Activated naive CD4-positive, alpha-beta T cell treated with anti-CD3 and anti-CD28 coated beads for 36 hours (primary cell): ENCODE measurements at regions of chr1 and their contacts with region 1.

Region 1: DNA sequence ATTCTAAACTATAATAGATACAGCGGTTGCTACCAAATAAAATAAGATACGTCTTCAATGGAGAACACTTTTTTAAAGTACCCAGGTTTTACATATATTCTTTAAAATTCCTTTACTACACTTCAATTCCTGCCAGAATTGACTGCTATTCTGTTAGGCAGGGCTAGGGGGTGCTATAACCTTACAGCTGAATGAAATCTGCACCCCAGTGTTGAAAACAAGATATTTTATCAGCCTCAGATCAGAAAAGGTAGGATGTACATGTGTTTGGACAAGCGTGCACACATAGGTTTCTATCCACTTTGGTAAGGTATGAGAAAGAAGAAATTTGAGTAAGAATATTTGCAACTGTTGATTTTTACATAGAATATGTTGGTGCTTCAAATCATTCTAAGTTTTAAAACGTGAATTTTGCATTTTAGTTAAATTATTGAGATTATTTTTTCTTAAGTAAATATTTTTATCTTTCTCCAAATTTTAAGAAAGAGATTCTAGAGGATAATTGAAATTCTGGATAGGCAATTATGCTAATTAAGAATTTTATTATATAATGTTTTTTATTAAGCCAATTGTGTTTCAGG is 490.8 kb upstream of the ADGRL4 start:
- DNase-seq: peak; percentile 16
- H3K4me3 Mint-ChIP-seq: no peak overlapping the region
- H3K27ac Mint-ChIP-seq: no peak overlapping the region
- H3K4me1 Mint-ChIP-seq: no peaks in the 10 kb centered on the region
- H3K27me3 Mint-ChIP-seq: no peaks in the 10 kb centered on the region

Region 2: GRCh38 chr1:78911956-78912880 is 585.1 kb before region 1 on chr1:
- CTCF ChIA-PET with region 1: no interaction called
- intact Hi-C with region 1: no loop called
- DNase-seq: no peak
- H3K4me3 Mint-ChIP-seq: no peak overlapping the region
- H3K27ac Mint-ChIP-seq: no peak overlapping the region
- H3K4me1 Mint-ChIP-seq: no peaks in the 10 kb centered on the region
- H3K27me3 Mint-ChIP-seq: no peaks in the 10 kb centered on the region

Region 3: DNA sequence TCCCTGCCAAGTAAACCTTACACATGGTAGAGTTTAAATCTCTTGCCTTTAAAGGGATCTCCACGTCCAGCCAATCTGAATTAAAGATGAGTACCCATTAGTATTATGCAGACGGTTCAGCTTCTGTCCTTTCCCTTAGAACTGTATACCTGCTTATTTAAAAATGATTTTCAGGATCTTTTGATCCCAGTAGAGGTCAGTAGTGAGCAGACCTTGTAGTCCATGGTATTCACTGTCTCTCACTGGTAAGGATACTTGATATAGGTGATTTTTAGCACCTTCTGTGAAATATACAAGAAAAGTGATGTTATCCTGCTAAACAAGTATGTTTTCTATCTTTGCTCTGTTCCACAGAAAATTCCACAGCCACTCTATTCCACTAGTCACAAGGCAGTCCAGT is 720.8 kb after region 1 on chr1:
- CTCF ChIA-PET with region 1: no interaction called
- intact Hi-C with region 1: loop called (anchors 5 kb)
- DNase-seq: no peak
- H3K4me3 Mint-ChIP-seq: no peak overlapping the region
- H3K27ac Mint-ChIP-seq: no peak overlapping the region
- H3K4me1 Mint-ChIP-seq: no peaks in the 10 kb centered on the region
- H3K27me3 Mint-ChIP-seq: no peaks in the 10 kb centered on the region